Dorsolateral prefrontal cortex (tissue), 120 donors: ENCODE measurements at regions of chr11 and their contacts with region 1.

Region 1: GRCh38 chr11:6481012-6481923 is at the starts of genes ARFIP2 and TIMM10B:
- DNase-seq: peak; percentile 99 to 100 (median 100)
- H3K4me3 ChIP-seq: peak within 1 kb of the TSS; percentile 61 to 99 (median 88)
- H3K27ac ChIP-seq: peak within 1 kb of the TSS; percentile 11 to 96 (median 87)
- H3K27me3 ChIP-seq: no peaks in the 10 kb centered on the region
- CTCF ChIP-seq: peak in 27 of 56 donors; percentile 8 to 49 (median 28)
- total RNA-seq, gene ARFIP2: 36.5 to 66.3 (median 51.4) TPM
- total RNA-seq, gene TIMM10B: 39.2 to 73.5 (median 47.7) TPM

Region 2: GRCh38 chr11:5796541-5796940 is 684.7 kb before region 1 on chr11:
- intact Hi-C with region 1: no loop called
- DNase-seq: no peak
- H3K4me3 ChIP-seq: no peak overlapping the region
- H3K27ac ChIP-seq: no peak overlapping the region
- H3K27me3 ChIP-seq: peaks cover 0 to 7% (median 0%) of the 10 kb centered on the region in 45 donors
- CTCF ChIP-seq: no peak

Region 3: GRCh38 chr11:6234387-6235107 is 246.7 kb before region 1 on chr11 and contains the start of gene FHIP1B:
- intact Hi-C with region 1: loop called in 1 of 2 experiments (anchors 5 kb)
- DNase-seq: peak; percentile 99 to 100 (median 100)
- H3K4me3 ChIP-seq: peak within 1 kb of the TSS; percentile 49 to 92 (median 80)
- H3K27ac ChIP-seq: peak within 1 kb of the TSS in 53 of 59 donors; percentile 0 to 88 (median 73)
- H3K27me3 ChIP-seq: no peaks in the 10 kb centered on the region
- CTCF ChIP-seq: peak in 34 of 56 donors; percentile 3 to 61 (median 28)
- total RNA-seq, gene FHIP1B: 27.8 to 55.6 (median 37.8) TPM

Region 4: DNA sequence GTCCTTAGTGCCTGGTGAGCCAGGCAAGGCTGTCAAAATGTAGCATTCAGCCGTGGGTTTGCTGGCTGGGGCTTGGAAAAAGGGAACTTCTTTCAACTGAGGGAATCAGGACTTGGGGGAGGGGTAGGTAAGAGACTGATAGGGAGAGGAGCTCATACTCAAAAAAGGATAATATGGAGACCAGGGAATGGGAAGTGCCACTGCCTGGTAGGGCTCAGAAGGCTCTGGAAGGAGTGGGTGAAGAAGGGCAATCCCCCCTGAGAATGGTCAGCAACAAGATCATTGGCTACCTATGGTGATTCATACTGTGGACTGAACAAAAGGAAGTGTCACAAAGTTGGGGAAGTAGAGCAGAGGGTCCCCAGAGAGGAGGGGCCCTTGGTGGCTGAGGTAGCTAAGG is 240.5 kb before region 1 on chr11:
- intact Hi-C with region 1: loop called (anchors 5 kb)
- DNase-seq: no peak
- H3K4me3 ChIP-seq: no peak overlapping the region
- H3K27ac ChIP-seq: no peak overlapping the region
- H3K27me3 ChIP-seq: no peaks in the 10 kb centered on the region
- CTCF ChIP-seq: no peak

Region 5: GRCh38 chr11:6389921-6390724 is 91.1 kb before region 1 on chr11 and contains the start of gene SMPD1:
- intact Hi-C with region 1: loop called (anchors 5 kb)
- DNase-seq: peak; percentile 87 to 94 (median 92)
- H3K4me3 ChIP-seq: peak within 1 kb of the TSS; percentile 61 to 99 (median 90)
- H3K27ac ChIP-seq: peak within 1 kb of the TSS; percentile 68 to 99 (median 94)
- H3K27me3 ChIP-seq: no peaks in the 10 kb centered on the region
- CTCF ChIP-seq: peak in 24 of 56 donors; percentile 5 to 60 (median 34)
- total RNA-seq, gene SMPD1: 37.6 to 97.6 (median 53.8) TPM

Region 6: GRCh38 chr11:6419009-6419631 is 62.1 kb before region 1 on chr11 and contains the start of gene APBB1:
- intact Hi-C with region 1: loop called in 1 of 2 experiments (anchors 5 kb)
- DNase-seq: peak in 7 of 10 donors; percentile 57 to 87 (median 67)
- H3K4me3 ChIP-seq: peak within 1 kb of the TSS; percentile 69 to 100 (median 93)
- H3K27ac ChIP-seq: peak within 1 kb of the TSS; percentile 91 to 100 (median 98)
- H3K27me3 ChIP-seq: no peaks in the 10 kb centered on the region
- CTCF ChIP-seq: peak in 39 of 56 donors; percentile 7 to 53 (median 27)
- total RNA-seq, gene APBB1: 235 to 475 (median 368) TPM

Region 7: GRCh38 chr11:6612213-6613041 is 131.2 kb after region 1 on chr11 and contains the start of gene TAF10:
- intact Hi-C with region 1: loop called in 1 of 2 experiments (anchors 2 kb)
- DNase-seq: peak; percentile 94 to 98 (median 97)
- H3K4me3 ChIP-seq: peak within 1 kb of the TSS; percentile 59 to 89 (median 79)
- H3K27ac ChIP-seq: peak within 1 kb of the TSS; percentile 85 to 100 (median 99)
- H3K27me3 ChIP-seq: no peaks in the 10 kb centered on the region
- CTCF ChIP-seq: peak in 33 of 56 donors; percentile 5 to 45 (median 23)
- total RNA-seq, gene TAF10: 45.6 to 116 (median 75.0) TPM